ENCODE measurements at regions of chr4 and their contacts with region 1.

Region 1: DNA sequence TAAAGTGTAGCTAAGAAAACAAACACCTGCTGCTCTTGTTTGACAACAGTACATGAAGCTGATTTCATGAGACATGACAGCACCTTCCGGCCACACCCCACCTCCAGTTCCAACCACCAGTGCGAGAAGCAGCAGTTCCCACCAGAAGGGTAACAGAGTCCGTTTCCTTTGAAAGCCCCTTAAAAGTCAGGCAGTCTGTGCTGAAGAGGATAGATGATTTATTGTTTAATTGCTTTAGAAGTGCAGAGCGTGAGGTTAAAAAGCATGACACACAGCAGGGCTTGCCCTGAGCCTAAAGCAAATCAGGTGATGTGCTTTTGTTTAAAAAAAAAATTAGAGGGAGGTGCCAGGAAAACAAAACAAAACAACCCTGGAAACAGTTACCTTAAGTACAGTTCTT is 82.6 kb downstream of the HADH start:
- DNase-seq: no peak
- ATAC-seq: no peak
- H3K4me3 ChIP-seq: no peak overlapping the region
- H3K27ac ChIP-seq: no peak overlapping the region
- H3K4me1 ChIP-seq: no peaks in the 10 kb centered on the region
- H3K27me3 ChIP-seq: peaks cover 2% of the 10 kb centered on the region; the same call in 1 of the 2 replicates
- CTCF ChIP-seq: no peak
- POLR2A ChIP-seq: no peak
- RAD21 ChIP-seq: no peak

Region 2: DNA sequence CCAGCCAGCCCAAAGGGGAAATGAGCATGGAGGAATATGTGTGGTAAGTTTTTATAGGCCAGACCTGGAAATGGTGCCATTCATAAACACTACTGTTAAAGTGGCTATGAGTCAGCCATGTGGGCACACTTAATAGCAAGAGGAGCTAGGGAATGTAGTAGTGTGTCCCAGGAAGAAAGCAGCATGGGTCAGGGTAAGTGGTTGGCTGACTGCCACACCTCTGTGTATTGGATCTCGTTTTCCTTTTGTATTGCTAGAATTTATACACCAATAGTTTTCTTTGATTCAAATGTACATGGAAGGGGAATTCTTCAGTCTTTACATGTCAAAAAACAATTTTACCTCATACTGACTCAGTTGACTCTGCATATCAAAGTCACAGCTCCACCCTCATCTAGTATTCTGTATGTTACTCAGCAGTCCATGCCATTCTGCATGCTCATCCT is 270.5 kb before region 1 on chr4:
- CTCF ChIA-PET with region 1: no interaction called
- POLR2A ChIA-PET with region 1: no interaction called
- dilution Hi-C with region 1: no loop called
- in situ Hi-C with region 1: no loop called
- intact Hi-C with region 1: no loop called
- DNase-seq: peak; percentile 27
- ATAC-seq: peak; percentile 46
- H3K4me3 ChIP-seq: no peak overlapping the region
- H3K27ac ChIP-seq: no peak overlapping the region
- H3K4me1 ChIP-seq: no peaks in the 10 kb centered on the region
- H3K27me3 ChIP-seq: peaks cover 15% of the 10 kb centered on the region
- CTCF ChIP-seq: no peak
- POLR2A ChIP-seq: no peak
- RAD21 ChIP-seq: no peak

Region 3: DNA sequence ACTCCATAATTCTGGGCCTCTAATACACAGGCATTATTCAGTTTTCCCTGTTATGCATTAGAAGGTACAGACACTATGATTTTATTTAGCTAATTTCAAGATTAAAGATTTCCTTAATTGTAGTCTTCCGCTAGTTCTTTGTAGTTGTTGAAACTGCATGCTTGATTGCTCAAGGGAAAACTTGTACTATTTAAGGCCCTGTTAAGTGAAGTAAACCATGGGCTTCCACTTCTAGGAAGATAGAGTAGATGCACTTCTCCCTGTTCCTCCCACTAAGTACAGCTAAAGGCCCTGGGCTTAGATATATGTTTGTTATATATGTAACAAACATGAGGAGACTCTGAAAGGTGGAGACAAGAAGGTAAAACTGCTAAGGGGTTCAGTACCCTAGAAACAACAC is 312.2 kb after region 1 on chr4:
- CTCF ChIA-PET with region 1: no interaction called
- POLR2A ChIA-PET with region 1: no interaction called
- dilution Hi-C with region 1: no loop called
- in situ Hi-C with region 1: no loop called
- intact Hi-C with region 1: loop called (anchors 5 kb)
- DNase-seq: no peak
- ATAC-seq: no peak
- H3K4me3 ChIP-seq: no peak overlapping the region
- H3K27ac ChIP-seq: no peak overlapping the region
- H3K4me1 ChIP-seq: no peaks in the 10 kb centered on the region
- H3K27me3 ChIP-seq: peaks cover 3% of the 10 kb centered on the region
- CTCF ChIP-seq: no peak
- POLR2A ChIP-seq: no peak
- RAD21 ChIP-seq: no peak